Activated CD4-positive, alpha-beta T cell treated with anti-CD3 and anti-CD28 coated beads, Interleukin-2, amount 10 ng/mL, durations not matched to agents 7 days and 5 days (primary cell): ENCODE measurements at regions of chr9 and their contacts with region 1.

Region 1: GRCh38 chr9:83334320-83334719 is 203.9 kb downstream of the FRMD3 start:
- DNase-seq: peak; percentile 81
- H3K4me3 Mint-ChIP-seq: no peak overlapping the region
- H3K27ac Mint-ChIP-seq: no peak overlapping the region
- H3K4me1 Mint-ChIP-seq: peaks cover 3% of the 10 kb centered on the region
- H3K27me3 Mint-ChIP-seq: no peaks in the 10 kb centered on the region

Region 2: GRCh38 chr9:83322438-83322837 is 11.9 kb before region 1 on chr9:
- CTCF ChIA-PET with region 1: no interaction called
- POLR2A ChIA-PET with region 1: no interaction called
- DNase-seq: no peak
- H3K4me3 Mint-ChIP-seq: no peak overlapping the region
- H3K27ac Mint-ChIP-seq: no peak overlapping the region
- H3K4me1 Mint-ChIP-seq: no peaks in the 10 kb centered on the region
- H3K27me3 Mint-ChIP-seq: peaks cover 10% of the 10 kb centered on the region

Region 3: DNA sequence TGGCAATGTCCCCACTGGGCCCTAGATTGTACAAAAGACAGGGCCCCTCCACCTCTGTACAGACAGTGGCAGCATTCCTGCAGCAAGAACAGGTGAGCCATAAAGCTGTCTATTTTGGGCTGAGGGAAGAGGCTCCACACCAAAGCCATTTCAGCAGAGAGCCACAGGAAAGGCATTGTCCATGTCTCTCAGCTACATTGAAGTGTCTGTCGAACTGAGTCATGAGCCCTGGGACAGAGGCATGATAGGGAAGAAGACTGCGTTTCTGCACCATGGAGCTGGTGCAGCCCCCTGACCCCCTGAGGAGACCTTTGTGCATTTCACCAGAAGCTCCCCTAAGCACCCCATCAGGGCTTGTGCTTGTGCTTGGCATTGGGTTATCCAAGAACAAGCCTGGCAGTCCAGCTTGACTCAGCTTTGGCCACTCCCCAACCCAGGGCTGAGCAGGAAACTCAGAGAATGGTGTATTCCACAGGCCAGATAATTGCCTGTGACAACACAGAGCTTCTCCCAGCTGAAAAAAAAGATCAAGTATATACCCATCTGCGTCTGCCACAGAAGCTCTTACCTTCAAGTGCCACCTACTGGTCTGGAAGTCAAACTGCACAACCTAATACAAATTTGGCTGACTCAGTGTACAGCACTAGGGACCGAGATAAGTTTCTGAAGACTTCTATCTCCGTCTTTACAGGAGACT is 209.8 kb after region 1 on chr9:
- CTCF ChIA-PET with region 1: interaction called, 19 read pairs
- POLR2A ChIA-PET with region 1: no interaction called
- DNase-seq: peak; percentile 12
- H3K4me3 Mint-ChIP-seq: no peak overlapping the region
- H3K27ac Mint-ChIP-seq: no peak overlapping the region
- H3K4me1 Mint-ChIP-seq: no peaks in the 10 kb centered on the region
- H3K27me3 Mint-ChIP-seq: peaks cover 20% of the 10 kb centered on the region